Cardiac septum (tissue), 1 donor: ENCODE measurements at regions of chr19 and their contacts with region 1.

Region 1: GRCh38 chr19:19488875-19489690 is 26.3 kb downstream of the TSSK6 start:
- DNase-seq: peak; percentile 83

Region 2: DNA sequence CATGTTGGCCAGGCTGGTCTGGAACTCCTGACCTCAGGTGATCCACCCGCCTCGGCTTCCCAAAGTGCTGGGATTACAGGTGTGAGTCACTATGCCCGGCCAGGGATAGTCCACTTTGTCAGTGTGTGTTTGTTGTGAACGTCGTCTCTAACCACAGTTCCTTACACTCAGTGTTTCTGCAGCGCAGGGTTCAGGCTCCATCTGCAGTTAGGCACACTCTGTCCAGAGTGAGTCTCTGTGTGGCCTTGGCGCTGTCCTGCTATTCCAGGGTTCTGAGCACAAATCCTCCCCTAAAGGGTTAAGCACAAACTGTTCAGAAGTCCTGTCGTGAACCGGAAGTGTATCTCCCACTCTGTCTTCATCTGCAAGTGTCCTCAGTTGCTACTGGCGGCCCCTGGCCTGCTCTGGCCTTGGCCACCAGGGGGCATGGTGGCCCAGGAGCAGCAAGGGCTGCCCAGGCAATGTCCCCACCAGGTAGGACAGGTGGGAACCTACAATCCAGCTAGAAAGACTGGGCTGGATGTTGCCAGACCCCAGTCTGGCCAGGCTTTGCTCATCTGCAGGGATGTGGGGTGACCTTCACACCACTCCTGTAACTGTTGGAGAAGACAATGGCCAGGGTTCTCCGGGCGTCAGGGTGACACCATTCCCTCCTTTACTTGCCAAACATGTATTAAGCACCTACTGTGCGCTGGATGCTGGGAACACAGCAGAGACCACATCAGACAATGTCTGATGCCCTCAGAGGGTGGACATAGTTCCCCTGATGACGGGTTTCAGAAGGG is 122.3 kb before region 1 on chr19:
- intact Hi-C with region 1: loop called (anchors 1 kb)
- DNase-seq: peak; percentile 89

Region 3: GRCh38 chr19:19578252-19578651 is 89.2 kb after region 1 on chr19:
- intact Hi-C with region 1: no loop called
- DNase-seq: no peak

Region 4: GRCh38 chr19:19745496-19746285 is 256.6 kb after region 1 on chr19:
- intact Hi-C with region 1: no loop called
- DNase-seq: no peak